HEK293 (cell line): ENCODE measurements at regions of chr19 and their contacts with region 1.

Region 1: GRCh38 chr19:12440541-12441316 is at the start of gene ZNF443:
- H3K4me3 ChIP-seq: peak within 1 kb of the TSS; percentile 76
- H3K27ac ChIP-seq: peak within 1 kb of the TSS; percentile 72
- H3K4me1 ChIP-seq: no peaks in the 10 kb centered on the region
- CTCF ChIP-seq: peak; percentile 13; the same call in 1 of the 2 replicates

Region 2: DNA sequence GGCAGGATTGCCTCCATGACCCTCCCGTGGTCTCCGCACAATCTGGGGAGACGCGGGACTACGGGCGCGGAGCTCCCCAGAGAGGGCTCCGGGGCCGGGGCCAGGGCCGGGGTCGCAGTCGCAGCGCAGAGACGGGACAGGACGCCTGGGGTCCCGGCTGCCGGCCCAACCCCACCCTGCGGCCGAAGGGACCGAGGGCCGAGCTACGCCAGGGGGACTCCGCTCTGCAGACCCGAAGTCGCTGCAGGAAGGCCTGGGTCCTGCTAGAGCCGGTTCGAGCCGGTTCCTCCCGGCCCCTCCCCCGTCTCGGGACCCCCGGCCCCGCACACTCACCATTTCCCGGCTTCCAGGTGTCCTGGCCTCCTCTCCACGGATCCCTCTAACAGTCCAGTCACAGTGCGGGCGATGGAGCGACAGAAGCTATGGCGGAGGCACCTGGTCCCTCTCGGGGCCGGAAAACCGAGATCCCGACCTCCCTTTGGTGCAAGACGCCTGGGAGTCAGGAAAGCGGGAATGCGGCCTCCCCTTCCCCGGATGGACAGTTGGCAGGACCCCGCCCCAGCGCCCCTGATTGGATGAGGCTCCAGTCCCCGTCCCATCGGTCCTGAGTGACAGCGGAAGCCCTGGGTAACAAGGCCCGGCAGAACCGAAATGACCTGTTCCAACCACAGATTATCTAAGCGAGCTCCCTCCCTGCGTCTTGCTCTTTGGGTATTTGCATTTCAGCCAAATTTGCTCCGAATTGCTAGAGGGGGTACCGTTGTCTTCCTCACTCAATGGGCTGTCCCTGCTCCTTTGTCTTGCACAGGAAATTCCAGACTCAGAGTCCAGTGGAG is 284.3 kb before region 1 on chr19 and contains the start of gene ZNF625:
- CTCF ChIA-PET with region 1: no interaction called
- POLR2A ChIA-PET with region 1: interaction called, 11 read pairs
- H3K4me3 ChIP-seq: peak within 1 kb of the TSS; percentile 89
- H3K27ac ChIP-seq: peak within 1 kb of the TSS; percentile 54
- H3K4me1 ChIP-seq: no peaks in the 10 kb centered on the region
- CTCF ChIP-seq: no peak

Region 3: DNA sequence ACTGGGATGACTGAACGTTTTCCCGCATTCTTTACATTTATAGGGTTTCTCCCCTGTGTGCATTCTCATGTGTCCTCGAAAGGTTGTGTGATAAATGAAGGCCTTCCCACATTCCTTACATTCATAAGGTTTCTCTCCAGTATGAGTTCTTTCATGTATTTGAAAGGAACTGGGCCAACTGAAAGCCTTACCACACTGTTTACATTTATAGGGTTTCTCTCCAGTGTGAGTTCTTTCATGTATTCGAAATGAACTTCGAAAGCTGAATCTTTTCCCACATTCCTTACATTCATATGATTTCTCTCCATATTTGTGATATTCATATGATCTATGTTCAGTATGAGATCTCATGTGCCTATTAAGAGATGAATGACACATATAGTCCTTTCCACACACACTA is 24.5 kb after region 1 on chr19:
- CTCF ChIA-PET with region 1: no interaction called
- POLR2A ChIA-PET with region 1: no interaction called
- H3K4me3 ChIP-seq: no peak overlapping the region
- H3K27ac ChIP-seq: no peak overlapping the region
- H3K4me1 ChIP-seq: no peaks in the 10 kb centered on the region
- CTCF ChIP-seq: no peak

Region 4: GRCh38 chr19:12495002-12495802 is 54.5 kb after region 1 on chr19:
- CTCF ChIA-PET with region 1: interaction called, 3 read pairs
- POLR2A ChIA-PET with region 1: interaction called, 16 read pairs
- H3K4me3 ChIP-seq: peak overlapping the region; percentile 65
- H3K27ac ChIP-seq: peak overlapping the region; percentile 65
- H3K4me1 ChIP-seq: no peaks in the 10 kb centered on the region
- CTCF ChIP-seq: peak; percentile 85